HepG2 (cell line): ENCODE measurements at regions of chr6 and their contacts with region 1.

Region 1: DNA sequence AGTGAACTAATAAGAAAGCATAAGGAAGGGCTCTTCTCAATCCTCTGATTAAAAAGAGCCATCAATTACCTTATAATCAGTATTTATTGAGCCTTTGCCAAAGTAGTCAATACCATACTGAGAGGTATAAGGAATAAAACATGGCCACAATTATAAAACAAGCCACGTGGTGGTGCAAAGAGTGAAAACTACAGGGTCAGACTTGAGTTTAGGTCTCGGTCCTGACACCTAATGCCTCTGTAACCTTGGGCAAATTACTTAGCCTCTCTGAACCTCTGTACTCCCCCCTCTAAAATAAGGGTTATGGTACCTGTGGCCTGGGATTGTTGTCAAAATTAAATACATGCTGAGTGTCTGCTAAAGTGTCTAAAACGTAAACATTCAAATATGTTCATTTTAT is 11.8 kb downstream of the TRIM10 start:
- DNase-seq: no peak
- ATAC-seq: no peak
- H3K4me3 ChIP-seq: no peak overlapping the region
- H3K27ac ChIP-seq: no peak overlapping the region
- H3K4me1 ChIP-seq: peaks cover 56% of the 10 kb centered on the region
- H3K27me3 ChIP-seq: no peaks in the 10 kb centered on the region; a peak in 1 of 5 replicates
- CTCF ChIP-seq: 0 out of 2 replicates have a peak, but pooled peaks have one; percentile 12
- EP300 ChIP-seq: no peak
- POLR2A ChIP-seq: no peak
- RAD21 ChIP-seq: no peak

Region 2: DNA sequence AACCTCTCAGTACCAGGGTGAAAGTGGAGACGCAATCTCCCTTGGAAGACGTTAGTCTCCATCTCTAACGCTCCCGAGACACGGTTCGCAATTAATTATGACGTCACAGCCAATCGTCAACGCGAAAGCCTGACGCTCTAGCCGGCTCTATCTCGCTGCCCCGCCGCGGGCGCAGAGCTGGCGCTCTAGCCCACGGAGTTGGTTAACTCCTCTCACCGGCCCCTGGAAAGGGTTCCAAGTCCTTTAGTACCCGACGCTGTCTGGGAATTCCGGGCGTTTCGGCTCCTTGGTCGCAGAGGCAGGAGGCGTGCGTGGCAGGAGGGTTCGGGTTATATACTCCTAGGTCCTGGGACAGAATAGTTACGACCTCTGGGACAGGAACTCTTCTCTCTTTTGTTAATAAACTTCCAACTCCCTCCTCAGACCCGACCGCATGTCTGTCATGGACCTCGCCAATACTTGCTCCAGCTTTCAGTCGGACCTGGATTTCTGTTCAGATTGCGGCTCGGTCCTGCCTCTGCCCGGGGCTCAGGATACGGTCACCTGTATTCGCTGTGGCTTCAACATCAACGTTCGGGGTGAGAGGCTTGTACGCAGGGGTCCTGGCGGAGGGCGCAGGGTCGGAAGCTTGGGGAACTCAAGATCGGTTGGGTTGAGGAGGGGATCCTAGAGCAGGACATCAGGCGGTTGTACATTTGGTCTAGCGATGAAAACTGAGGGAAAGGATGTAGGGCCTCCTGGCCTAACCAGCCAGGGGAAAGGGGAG is 88.0 kb before region 1 on chr6 and contains the start of gene POLR1H:
- CTCF ChIA-PET with region 1: no interaction called
- POLR2A ChIA-PET with region 1: no interaction called
- in situ Hi-C with region 1: no loop called
- intact Hi-C with region 1: no loop called
- DNase-seq: peak; percentile 95
- ATAC-seq: peak; percentile 98
- H3K4me3 ChIP-seq: peak within 1 kb of the TSS; percentile 89 to 99 (median 93)
- H3K27ac ChIP-seq: peak within 1 kb of the TSS; percentile 75
- H3K4me1 ChIP-seq: peaks cover 35% of the 10 kb centered on the region
- H3K27me3 ChIP-seq: peaks cover 0 to 4% of the 10 kb centered on the region in 2 experiments; a peak in 1 of 5 replicates
- CTCF ChIP-seq: no peak; the same call in 1 of the 2 replicates
- EP300 ChIP-seq: peak; percentile 34 to 59; a peak in 3 of 4 replicates
- POLR2A ChIP-seq: peak; percentile 90 to 97
- RAD21 ChIP-seq: no peak; the same call in 1 of the 2 replicates
- total RNA-seq, gene POLR1H: 79.8 and 106 TPM in 2 replicates

Region 3: DNA sequence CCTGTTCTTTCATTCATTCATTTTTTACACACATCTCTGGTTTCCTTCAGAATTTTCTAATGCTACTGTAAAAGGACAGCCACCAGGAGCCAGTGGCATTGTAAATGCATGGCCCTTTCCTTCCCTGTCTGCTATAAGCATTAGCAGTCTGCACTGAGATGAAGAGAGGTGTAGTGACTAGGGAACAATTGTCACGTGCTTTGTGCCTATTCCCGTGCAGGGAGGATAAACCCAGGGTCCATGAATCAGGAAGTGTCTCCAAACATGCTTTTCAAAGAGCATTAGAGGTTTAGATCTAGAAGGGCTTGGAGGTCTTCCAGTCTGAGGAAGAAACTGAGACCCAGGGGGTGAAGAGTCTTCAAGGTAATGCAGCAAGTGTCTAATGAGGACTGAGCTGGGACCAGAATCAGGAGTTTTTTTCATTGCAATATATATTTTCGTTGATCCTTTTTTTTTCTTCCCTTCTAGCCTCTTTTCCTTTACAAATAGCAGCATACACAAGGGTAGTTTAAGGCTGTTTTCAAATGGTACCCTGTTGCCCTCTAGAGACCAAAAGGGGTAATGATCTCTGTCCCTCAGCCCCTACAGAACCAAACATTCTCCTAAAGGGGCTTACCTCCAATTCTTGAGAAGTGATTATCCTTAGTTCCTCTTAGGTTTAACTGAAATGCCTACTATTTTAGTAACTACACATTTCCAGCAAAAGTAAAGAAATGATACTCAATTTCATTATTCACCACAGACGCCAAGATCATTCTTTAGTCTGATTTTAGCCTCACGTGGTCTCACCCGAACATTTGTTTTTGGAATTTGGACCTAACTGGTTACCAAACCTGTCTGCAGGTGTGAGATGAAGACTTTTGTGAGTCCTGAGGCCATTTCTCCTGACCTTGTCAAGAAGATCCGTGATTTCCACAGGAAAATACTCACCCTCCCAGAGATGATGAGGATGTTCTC is 20.7 kb after region 1 on chr6:
- CTCF ChIA-PET with region 1: interaction called, 6 read pairs
- POLR2A ChIA-PET with region 1: interaction called, 5 read pairs
- in situ Hi-C with region 1: no loop called
- intact Hi-C with region 1: loop called (anchors 1 kb)
- DNase-seq: peak; percentile 68
- ATAC-seq: peak; percentile 93
- H3K4me3 ChIP-seq: no peak overlapping the region
- H3K27ac ChIP-seq: no peak overlapping the region
- H3K4me1 ChIP-seq: peaks cover 28% of the 10 kb centered on the region
- H3K27me3 ChIP-seq: peaks cover 0 to under 1% of the 10 kb centered on the region in 2 experiments; a peak in 1 of 5 replicates
- CTCF ChIP-seq: peak; percentile 86
- EP300 ChIP-seq: no peak
- POLR2A ChIP-seq: no peak
- RAD21 ChIP-seq: peak; percentile 89